WTC11 (cell line): ENCODE measurements at regions of chr3 and their contacts with region 1.

Region 1: DNA sequence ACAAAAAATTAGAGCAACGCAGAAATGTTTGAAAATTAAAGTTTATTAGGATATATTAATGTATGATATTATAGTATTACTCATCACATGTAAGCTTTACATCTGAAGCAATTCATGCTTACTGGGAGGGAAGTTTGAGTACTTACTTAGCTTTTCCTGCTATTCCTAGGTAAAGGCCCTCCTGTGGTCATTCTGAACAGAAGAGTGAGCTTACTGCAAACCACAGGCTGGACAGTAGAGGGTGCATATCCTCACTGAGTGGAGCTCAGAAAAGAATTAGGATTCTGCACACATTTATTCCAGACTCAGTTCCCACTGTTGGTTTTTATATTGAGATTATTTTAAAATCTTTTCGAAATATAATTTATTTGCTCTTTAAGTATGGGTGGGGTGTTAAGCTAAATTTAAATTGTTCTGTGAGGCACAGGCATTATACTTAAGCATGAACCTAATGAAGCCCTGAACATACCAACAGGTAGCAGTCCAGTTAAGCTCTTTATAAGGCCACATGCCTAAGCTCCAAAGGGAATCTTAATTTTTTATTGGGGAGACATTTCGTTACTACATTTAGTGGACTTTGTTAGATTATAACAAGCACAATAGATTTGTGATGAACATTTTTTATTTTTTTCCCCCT is 10.2 kb downstream of the MRPS22 start:
- DNase-seq: no peak
- ATAC-seq: peak; percentile 91
- H3K4me3 Mint-ChIP-seq: no peak overlapping the region
- H3K27ac Mint-ChIP-seq: no peak overlapping the region
- H3K4me1 Mint-ChIP-seq: no peaks in the 10 kb centered on the region
- H3K27me3 Mint-ChIP-seq: no peaks in the 10 kb centered on the region
- CTCF ChIP-seq: no peak

Region 2: DNA sequence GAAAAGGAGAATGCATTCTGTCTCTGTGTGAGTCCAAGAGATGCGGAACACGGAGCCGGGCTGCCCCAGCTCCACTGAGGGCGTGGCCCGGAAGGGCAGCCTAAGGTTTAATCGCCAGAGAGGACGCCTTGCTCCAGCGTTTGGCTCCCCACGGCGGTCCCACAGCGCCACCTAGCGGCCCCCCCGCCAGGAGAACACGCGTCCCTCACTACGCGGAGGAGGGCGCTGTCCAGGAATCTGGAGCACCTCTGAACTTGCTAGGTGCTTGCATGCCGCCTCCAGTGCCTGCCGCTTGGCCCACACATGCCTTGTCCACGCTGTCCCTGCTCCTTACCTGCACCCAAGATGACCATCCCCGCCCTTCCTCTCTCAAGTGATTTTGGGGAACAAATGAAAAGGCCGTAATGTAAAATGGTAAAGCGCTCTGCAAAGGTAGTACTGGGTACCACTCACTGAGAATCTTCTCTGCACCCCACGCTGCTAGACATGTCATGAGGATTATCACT is 24.6 kb before region 1 on chr3:
- CTCF ChIA-PET with region 1: interaction called, 12 read pairs
- POLR2A ChIA-PET with region 1: no interaction called
- DNase-seq: peak; percentile 96
- ATAC-seq: peak; percentile 97
- H3K4me3 Mint-ChIP-seq: peak overlapping the region; percentile 56
- H3K27ac Mint-ChIP-seq: no peak overlapping the region
- H3K4me1 Mint-ChIP-seq: peaks cover 4% of the 10 kb centered on the region; the same call in 1 of the 2 replicates
- H3K27me3 Mint-ChIP-seq: peaks cover 60% of the 10 kb centered on the region
- CTCF ChIP-seq: peak; percentile 99

Region 3: GRCh38 chr3:139364549-139364948 is 10.5 kb after region 1 on chr3:
- CTCF ChIA-PET with region 1: interaction called, 11 read pairs
- POLR2A ChIA-PET with region 1: no interaction called
- DNase-seq: no peak
- ATAC-seq: no peak
- H3K4me3 Mint-ChIP-seq: no peak overlapping the region
- H3K27ac Mint-ChIP-seq: no peak overlapping the region
- H3K4me1 Mint-ChIP-seq: no peaks in the 10 kb centered on the region
- H3K27me3 Mint-ChIP-seq: no peaks in the 10 kb centered on the region
- CTCF ChIP-seq: no peak